CD8-positive, alpha-beta T cell (primary cell): ENCODE measurements at regions of chr16 and their contacts with region 1.

Region 1: GRCh38 chr16:88837806-88838205 is 18.9 kb downstream of the GALNS start:
- DNase-seq: no peak
- ATAC-seq: no peak
- H3K4me3 ChIP-seq: no peak overlapping the region
- H3K4me3 Mint-ChIP-seq: no peak overlapping the region
- H3K27ac ChIP-seq: no peak overlapping the region
- H3K27ac Mint-ChIP-seq: no peak overlapping the region
- H3K4me1 ChIP-seq: no peaks in the 10 kb centered on the region
- H3K4me1 Mint-ChIP-seq: no peaks in the 10 kb centered on the region
- H3K27me3 ChIP-seq: no peaks in the 10 kb centered on the region
- H3K27me3 Mint-ChIP-seq: no peaks in the 10 kb centered on the region
- CTCF ChIP-seq: no peak

Region 2: GRCh38 chr16:88870608-88871348 is 33.0 kb after region 1 on chr16:
- CTCF ChIA-PET with region 1: no interaction called
- POLR2A ChIA-PET with region 1: no interaction called
- intact Hi-C with region 1: loop called in 1 of 2 experiments (anchors 1 kb)
- DNase-seq: no peak
- ATAC-seq: peak; percentile 49
- H3K4me3 ChIP-seq: no peak overlapping the region
- H3K4me3 Mint-ChIP-seq: peak overlapping the region; percentile 32
- H3K27ac ChIP-seq: no peak overlapping the region
- H3K27ac Mint-ChIP-seq: no peak overlapping the region
- H3K4me1 ChIP-seq: no peaks in the 10 kb centered on the region
- H3K4me1 Mint-ChIP-seq: peaks cover 6% of the 10 kb centered on the region
- H3K27me3 ChIP-seq: peaks cover 6% of the 10 kb centered on the region in 2 experiments
- H3K27me3 Mint-ChIP-seq: peaks cover 8% of the 10 kb centered on the region
- CTCF ChIP-seq: no peak